ENCODE measurements at regions of chr11 and their contacts with region 1.

Region 1: GRCh38 chr11:63945477-63946163 is 6.8 kb downstream of the NAA40 start:
- DNase-seq: peak; percentile 68
- ATAC-seq: peak; percentile 95
- H3K4me3 Mint-ChIP-seq: no peak overlapping the region
- H3K27ac Mint-ChIP-seq: peak overlapping the region; percentile 80
- H3K4me1 Mint-ChIP-seq: peaks cover 4% of the 10 kb centered on the region; the same call in 1 of the 2 replicates
- H3K27me3 Mint-ChIP-seq: no peaks in the 10 kb centered on the region
- CTCF ChIP-seq: peak; percentile 41

Region 2: DNA sequence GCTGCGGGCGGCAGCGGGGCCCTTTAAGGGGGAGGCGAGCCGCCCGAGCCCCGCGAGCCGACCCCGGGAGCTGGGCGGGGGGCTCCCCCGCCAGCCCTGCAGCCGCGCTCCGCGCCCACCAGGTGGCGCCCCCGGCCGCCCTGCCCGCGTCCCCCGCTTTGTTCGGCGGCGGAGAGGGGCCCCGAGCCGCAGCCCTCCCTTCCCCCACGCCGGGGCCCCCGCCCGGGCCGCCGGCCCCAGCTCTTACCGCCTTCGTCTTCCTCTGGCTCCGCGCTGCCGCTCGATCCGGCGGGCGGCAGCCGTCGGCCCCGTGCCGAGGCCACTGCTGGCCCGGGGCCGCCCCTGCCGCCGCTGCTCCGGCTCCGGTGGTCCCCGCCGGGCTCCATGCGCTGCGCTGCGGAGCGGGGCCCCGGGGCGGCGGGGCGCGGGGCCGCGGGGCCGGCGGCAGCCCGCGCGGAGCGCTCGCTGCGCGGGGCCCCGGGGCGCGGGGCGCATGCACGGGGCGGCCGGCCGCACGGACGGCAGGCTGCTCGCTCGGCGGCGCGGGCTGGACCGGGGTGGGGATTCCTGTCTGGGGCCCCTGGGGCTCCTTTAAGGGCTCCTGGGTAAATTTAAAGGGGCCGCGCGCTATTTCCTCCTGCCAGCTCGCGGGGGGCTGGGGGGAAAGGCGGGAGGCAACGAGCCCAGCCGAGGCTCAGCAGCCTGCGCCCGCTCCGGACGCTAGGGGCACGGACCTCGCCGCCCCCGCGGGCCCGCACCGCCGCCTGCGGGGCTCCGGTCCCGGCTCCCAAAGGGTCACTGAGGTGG is 177.2 kb before region 1 on chr11 and contains the start of gene ZFTA:
- CTCF ChIA-PET with region 1: interaction called, 15 read pairs
- POLR2A ChIA-PET with region 1: no interaction called
- DNase-seq: peak; percentile 75
- ATAC-seq: peak; percentile 6
- H3K4me3 Mint-ChIP-seq: peak within 1 kb of the TSS; percentile 98
- H3K27ac Mint-ChIP-seq: peak within 1 kb of the TSS; percentile 98
- H3K4me1 Mint-ChIP-seq: peaks cover 37% of the 10 kb centered on the region
- H3K27me3 Mint-ChIP-seq: peaks cover 32% of the 10 kb centered on the region
- CTCF ChIP-seq: peak; percentile 78
- total RNA-seq, gene ZFTA: 44.7 to 47.2 TPM (median 45.6 TPM) in 3 replicates

Region 3: GRCh38 chr11:63838678-63839507 is 106.7 kb before region 1 on chr11 and contains the start of gene MARK2:
- CTCF ChIA-PET with region 1: interaction called, 57 read pairs
- POLR2A ChIA-PET with region 1: no interaction called
- DNase-seq: peak; percentile 99
- ATAC-seq: peak; percentile 88
- H3K4me3 Mint-ChIP-seq: peak within 1 kb of the TSS; percentile 90
- H3K27ac Mint-ChIP-seq: peak within 1 kb of the TSS; percentile 93
- H3K4me1 Mint-ChIP-seq: peaks cover 58% of the 10 kb centered on the region
- H3K27me3 Mint-ChIP-seq: no peaks in the 10 kb centered on the region
- CTCF ChIP-seq: no peak
- total RNA-seq, gene MARK2: 50.8 to 57.4 TPM (median 51.4 TPM) in 3 replicates

Region 4: DNA sequence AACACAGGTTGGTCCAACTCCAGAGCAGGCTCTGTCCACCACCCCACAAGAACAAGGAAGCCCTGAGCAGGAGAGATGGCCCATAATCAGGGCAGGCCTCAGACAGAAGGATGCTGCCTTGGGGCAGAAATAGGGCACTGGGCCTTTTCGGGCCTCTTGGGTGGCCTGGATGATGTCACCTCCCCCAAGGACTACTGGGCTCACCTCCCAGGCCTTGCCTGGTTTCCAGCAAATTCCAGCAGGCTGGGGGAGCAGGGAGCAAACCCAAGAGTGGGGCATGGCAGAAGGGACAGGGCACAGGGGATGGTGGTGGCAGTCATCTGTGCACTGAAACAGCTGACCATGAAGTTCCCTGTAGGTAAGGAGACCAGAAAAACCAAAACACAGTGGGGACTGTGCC is 12.2 kb before region 1 on chr11:
- CTCF ChIA-PET with region 1: interaction called, 28 read pairs
- POLR2A ChIA-PET with region 1: no interaction called
- DNase-seq: no peak
- ATAC-seq: no peak
- H3K4me3 Mint-ChIP-seq: no peak overlapping the region
- H3K27ac Mint-ChIP-seq: no peak overlapping the region
- H3K4me1 Mint-ChIP-seq: peaks cover 12% of the 10 kb centered on the region
- H3K27me3 Mint-ChIP-seq: peaks cover 32% of the 10 kb centered on the region
- CTCF ChIP-seq: no peak

Region 5: GRCh38 chr11:63978551-63979239 is 33.1 kb after region 1 on chr11:
- CTCF ChIA-PET with region 1: interaction called, 11 read pairs
- POLR2A ChIA-PET with region 1: no interaction called
- DNase-seq: no peak
- ATAC-seq: peak; percentile 17
- H3K4me3 Mint-ChIP-seq: peak overlapping the region; percentile 36
- H3K27ac Mint-ChIP-seq: peak overlapping the region; percentile 92
- H3K4me1 Mint-ChIP-seq: peaks cover 37% of the 10 kb centered on the region
- H3K27me3 Mint-ChIP-seq: peaks cover 4% of the 10 kb centered on the region; the same call in 1 of the 2 replicates
- CTCF ChIP-seq: no peak